ENCODE measurements at regions of chr14 and their contacts with region 1.

Region 1: DNA sequence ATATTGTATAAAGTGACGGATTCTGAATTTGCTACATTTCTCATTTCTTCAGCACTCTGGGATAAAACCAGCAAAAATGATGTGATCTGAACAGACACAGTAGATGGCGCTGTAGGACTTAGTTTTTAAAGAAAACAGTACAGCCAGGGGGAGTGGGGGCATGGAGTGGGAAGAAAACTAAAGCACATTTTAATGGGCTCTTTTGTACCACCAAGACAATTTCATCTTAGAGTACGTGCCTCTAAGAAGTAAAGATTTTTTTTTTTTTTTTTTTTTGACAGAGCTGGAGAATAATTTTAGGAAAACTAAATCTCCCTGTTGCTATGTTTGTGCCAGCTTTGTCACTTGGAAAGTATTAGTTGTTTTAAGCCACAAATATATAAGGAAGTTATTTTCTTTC is 124.4 kb downstream of the RAD51B start:
- DNase-seq: peak; percentile 85
- H3K4me3 ChIP-seq: no peak overlapping the region
- H3K27ac ChIP-seq: no peak overlapping the region
- H3K4me1 ChIP-seq: peaks cover 6% of the 10 kb centered on the region
- H3K27me3 ChIP-seq: no peaks in the 10 kb centered on the region
- CTCF ChIP-seq: peak; percentile 37 to 61
- POLR2A ChIP-seq: no peak

Region 2: DNA sequence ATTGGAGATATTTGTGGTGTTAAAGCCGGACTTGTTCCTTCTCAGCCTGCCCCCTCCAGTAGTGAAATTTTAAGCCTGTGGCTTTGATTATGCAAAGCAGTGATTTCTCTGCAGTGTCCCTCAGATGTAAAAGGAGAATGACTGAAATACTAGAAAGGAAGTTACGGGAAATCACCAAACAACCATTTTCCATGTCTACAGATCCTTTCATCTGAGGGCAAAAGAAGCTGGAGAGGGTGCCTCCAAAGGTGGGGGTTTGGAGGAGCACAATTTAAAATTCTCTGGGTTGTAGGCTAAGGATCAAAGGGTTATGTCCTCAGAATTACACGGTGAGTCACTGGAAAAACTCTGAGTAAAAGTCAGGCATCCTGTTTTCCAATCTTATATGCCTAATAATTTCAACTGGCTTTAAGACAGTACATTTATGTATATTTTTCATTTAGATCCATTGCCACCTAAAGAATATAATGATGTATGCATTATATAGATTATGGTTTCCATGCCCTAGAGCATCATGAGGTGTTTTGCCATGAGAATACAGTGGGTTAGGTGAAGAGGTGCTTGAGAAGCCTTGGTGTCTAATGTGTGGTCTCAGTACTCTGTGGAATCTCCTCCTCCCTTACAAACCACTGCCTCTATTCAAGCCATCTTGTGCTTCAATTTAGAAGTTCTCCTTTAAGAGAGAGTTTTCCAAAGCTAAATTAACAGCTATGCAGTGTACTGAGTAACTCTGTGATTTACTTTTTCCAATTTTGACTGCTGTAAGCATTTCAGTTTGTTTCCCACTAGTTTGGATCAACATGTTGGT is 237.8 kb after region 1 on chr14:
- CTCF ChIA-PET with region 1: no interaction called
- POLR2A ChIA-PET with region 1: no interaction called
- dilution Hi-C with region 1: no loop called
- intact Hi-C with region 1: no loop called
- DNase-seq: peak; percentile 79
- H3K4me3 ChIP-seq: no peak overlapping the region
- H3K27ac ChIP-seq: no peak overlapping the region
- H3K4me1 ChIP-seq: peaks cover 10% of the 10 kb centered on the region
- H3K27me3 ChIP-seq: no peaks in the 10 kb centered on the region
- CTCF ChIP-seq: no peak
- POLR2A ChIP-seq: no peak

Region 3: DNA sequence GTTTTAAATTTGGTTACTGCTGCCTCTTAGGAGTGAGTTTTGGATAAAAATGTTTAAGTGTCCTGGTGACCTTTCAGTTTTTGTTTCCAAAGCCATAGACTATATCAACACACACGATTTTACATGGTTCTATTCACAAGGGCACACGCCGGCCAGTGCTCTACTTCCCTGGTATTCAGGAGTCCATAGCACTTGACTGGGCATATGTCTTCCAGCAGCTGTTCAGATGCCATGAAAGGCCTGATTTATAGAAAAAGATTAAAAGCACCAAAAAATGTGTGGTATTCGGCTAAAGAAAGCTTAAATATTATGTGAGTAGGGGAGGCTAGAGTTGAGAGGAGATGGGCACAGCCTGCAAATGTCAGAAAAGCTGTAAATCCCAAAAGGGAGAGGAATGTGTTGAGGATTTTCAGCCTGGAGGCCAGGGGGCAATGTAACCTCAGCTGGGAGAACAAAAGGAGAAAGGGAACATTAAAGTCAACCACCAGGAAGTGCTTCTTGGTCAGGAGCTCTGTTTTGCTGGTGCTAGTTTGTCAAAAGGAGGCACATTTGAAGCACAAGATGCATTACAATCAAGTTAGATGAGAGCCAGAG is 354.0 kb after region 1 on chr14:
- CTCF ChIA-PET with region 1: interaction called, 7 read pairs
- POLR2A ChIA-PET with region 1: no interaction called
- dilution Hi-C with region 1: no loop called
- intact Hi-C with region 1: loop called (anchors 1 kb)
- DNase-seq: peak; percentile 58
- H3K4me3 ChIP-seq: no peak overlapping the region
- H3K27ac ChIP-seq: no peak overlapping the region
- H3K4me1 ChIP-seq: peaks cover 10% of the 10 kb centered on the region
- H3K27me3 ChIP-seq: no peaks in the 10 kb centered on the region
- CTCF ChIP-seq: peak; percentile 18 to 43
- POLR2A ChIP-seq: no peak

Region 4: GRCh38 chr14:68495101-68496039 is 551.4 kb after region 1 on chr14:
- CTCF ChIA-PET with region 1: no interaction called
- POLR2A ChIA-PET with region 1: no interaction called
- dilution Hi-C with region 1: no loop called
- intact Hi-C with region 1: loop called (anchors 1 kb)
- DNase-seq: peak; percentile 81
- H3K4me3 ChIP-seq: no peak overlapping the region
- H3K27ac ChIP-seq: peak overlapping the region; percentile 0
- H3K4me1 ChIP-seq: peaks cover 23% of the 10 kb centered on the region
- H3K27me3 ChIP-seq: no peaks in the 10 kb centered on the region
- CTCF ChIP-seq: no peak
- POLR2A ChIP-seq: no peak

Region 5: DNA sequence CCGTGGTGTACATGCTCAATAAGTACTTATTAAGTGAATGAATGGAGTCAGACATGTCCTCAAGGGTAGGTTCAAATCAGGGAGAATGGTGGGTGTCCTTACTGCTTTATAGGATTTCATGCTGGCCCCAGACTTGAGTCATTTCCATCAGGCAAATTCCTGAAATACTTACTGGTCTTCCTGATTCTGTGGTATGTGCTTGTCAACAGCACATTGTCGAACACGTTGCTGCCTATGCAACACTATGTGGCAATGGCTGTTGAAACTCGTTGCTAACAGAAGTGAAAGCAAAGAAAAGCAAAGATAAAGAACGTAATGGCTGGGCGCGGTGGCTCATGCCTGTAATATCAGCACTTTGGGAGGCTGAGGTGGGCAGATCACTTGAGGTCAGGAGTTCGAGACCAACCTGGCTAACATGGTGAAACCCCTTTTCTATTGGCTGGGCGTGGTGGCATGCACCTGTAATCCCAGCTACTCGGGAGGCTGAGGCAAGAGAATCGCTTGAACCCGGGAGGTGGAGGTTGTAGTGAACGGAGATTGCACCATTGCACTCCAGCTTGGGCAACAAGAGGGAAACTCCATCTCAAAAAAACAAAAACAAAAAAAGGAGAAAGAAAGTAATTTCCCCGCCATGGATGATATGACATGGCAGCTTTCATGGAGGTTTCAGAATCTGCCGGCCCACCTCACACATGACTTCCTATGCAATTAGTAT is 634.0 kb after region 1 on chr14:
- CTCF ChIA-PET with region 1: no interaction called
- POLR2A ChIA-PET with region 1: no interaction called
- dilution Hi-C with region 1: no loop called
- intact Hi-C with region 1: loop called (anchors 10 kb)
- DNase-seq: peak; percentile 94
- H3K4me3 ChIP-seq: no peak overlapping the region
- H3K27ac ChIP-seq: peak overlapping the region; percentile 77
- H3K4me1 ChIP-seq: peaks cover 40% of the 10 kb centered on the region
- H3K27me3 ChIP-seq: no peaks in the 10 kb centered on the region
- CTCF ChIP-seq: no peak
- POLR2A ChIP-seq: peak; percentile 77

Region 6: GRCh38 chr14:68816262-68816942 is 872.5 kb after region 1 on chr14:
- CTCF ChIA-PET with region 1: interaction called, 54 read pairs
- POLR2A ChIA-PET with region 1: interaction called, 4 read pairs
- dilution Hi-C with region 1: loop called (anchors 25 kb)
- intact Hi-C with region 1: loop called (anchors 1 kb)
- DNase-seq: peak; percentile 89
- H3K4me3 ChIP-seq: peak overlapping the region in 1 of 3 experiments; percentile 24
- H3K27ac ChIP-seq: peak overlapping the region; percentile 71
- H3K4me1 ChIP-seq: peaks cover 21% of the 10 kb centered on the region
- H3K27me3 ChIP-seq: no peaks in the 10 kb centered on the region
- CTCF ChIP-seq: peak; percentile 95
- POLR2A ChIP-seq: peak; percentile 46

Region 7: GRCh38 chr14:68824517-68825347 is 880.8 kb after region 1 on chr14:
- CTCF ChIA-PET with region 1: interaction called, 54 read pairs
- POLR2A ChIA-PET with region 1: no interaction called
- dilution Hi-C with region 1: loop called (anchors 25 kb)
- intact Hi-C with region 1: loop called (anchors 2 kb)
- DNase-seq: peak; percentile 66
- H3K4me3 ChIP-seq: no peak overlapping the region
- H3K27ac ChIP-seq: no peak overlapping the region
- H3K4me1 ChIP-seq: no peaks in the 10 kb centered on the region
- H3K27me3 ChIP-seq: no peaks in the 10 kb centered on the region
- CTCF ChIP-seq: peak; percentile 92 to 95
- POLR2A ChIP-seq: no peak

Region 8: GRCh38 chr14:68843471-68844209 is 899.7 kb after region 1 on chr14:
- CTCF ChIA-PET with region 1: interaction called, 21 read pairs
- POLR2A ChIA-PET with region 1: no interaction called
- dilution Hi-C with region 1: no loop called
- intact Hi-C with region 1: no loop called
- DNase-seq: peak; percentile 75
- H3K4me3 ChIP-seq: no peak overlapping the region
- H3K27ac ChIP-seq: no peak overlapping the region
- H3K4me1 ChIP-seq: peaks cover 14% of the 10 kb centered on the region
- H3K27me3 ChIP-seq: no peaks in the 10 kb centered on the region
- CTCF ChIP-seq: peak; percentile 92 to 95
- POLR2A ChIP-seq: no peak